ENCODE measurements at regions of chr3 and their contacts with region 1.

Region 1: GRCh38 chr3:160860346-160860745 is 104.3 kb downstream of the PPM1L start:
- DNase-seq: no peak
- H3K4me3 ChIP-seq: no peak overlapping the region
- H3K27ac ChIP-seq: no peak overlapping the region
- H3K4me1 ChIP-seq: no peaks in the 10 kb centered on the region
- H3K27me3 ChIP-seq: no peaks in the 10 kb centered on the region
- CTCF ChIP-seq: no peak
- POLR2A ChIP-seq: no peak

Region 2: GRCh38 chr3:160754855-160755747 is 105.2 kb before region 1 on chr3:
- intact Hi-C with region 1: no loop called
- DNase-seq: peak; percentile 87 to 89
- H3K4me3 ChIP-seq: peak overlapping the region; percentile 71 to 97 (median 74)
- H3K27ac ChIP-seq: peak overlapping the region; percentile 91 to 95
- H3K4me1 ChIP-seq: no peaks in the 10 kb centered on the region
- H3K27me3 ChIP-seq: no peaks in the 10 kb centered on the region
- CTCF ChIP-seq: peak in 1 of 3 donors; percentile 22
- POLR2A ChIP-seq: peak; percentile 49

Region 3: GRCh38 chr3:160784848-160785247 is 75.5 kb before region 1 on chr3:
- intact Hi-C with region 1: loop called (anchors 2 kb)
- DNase-seq: no peak
- H3K4me3 ChIP-seq: no peak overlapping the region
- H3K27ac ChIP-seq: peak overlapping the region; percentile 64 to 75
- H3K4me1 ChIP-seq: no peaks in the 10 kb centered on the region
- H3K27me3 ChIP-seq: no peaks in the 10 kb centered on the region
- CTCF ChIP-seq: no peak
- POLR2A ChIP-seq: no peak

Measured in breast epithelium (tissue), 4 donors.